ENCODE measurements at regions of chr9 and their contacts with region 1.

Region 1: DNA sequence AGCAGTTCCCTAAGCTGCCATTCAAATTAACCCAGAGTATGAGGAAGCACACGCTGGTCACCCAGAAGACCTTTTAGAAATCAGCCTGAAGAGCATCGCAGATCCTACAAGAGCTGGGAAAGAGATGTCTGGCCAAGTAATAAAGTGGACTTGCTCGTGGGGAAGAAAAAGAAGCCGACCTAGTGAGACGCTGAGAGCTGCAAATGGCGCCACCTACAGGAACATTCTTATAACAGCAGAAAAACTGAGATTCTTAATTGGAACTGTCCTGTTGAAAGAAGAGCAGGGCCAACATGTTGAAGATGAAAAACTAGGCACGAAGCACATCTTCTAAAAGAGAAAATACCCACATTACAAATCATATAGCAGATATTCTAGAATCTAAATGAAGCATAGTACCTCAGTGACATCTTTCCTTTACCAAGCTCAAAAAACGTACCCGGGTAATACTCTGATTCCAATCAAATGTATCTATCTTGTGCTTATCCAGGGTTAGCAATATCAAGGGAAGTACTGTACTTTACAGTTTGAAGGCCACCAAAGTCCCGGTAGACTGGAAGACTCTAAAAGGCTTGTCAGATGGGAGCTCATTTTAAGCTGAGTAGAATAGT is 3.9 kb upstream of the GNAQ start:
- DNase-seq: peak; percentile 48
- ATAC-seq: no peak
- H3K4me3 ChIP-seq: no peak overlapping the region
- H3K27ac ChIP-seq: no peak overlapping the region
- H3K4me1 ChIP-seq: peaks cover 6% of the 10 kb centered on the region
- H3K27me3 ChIP-seq: no peaks in the 10 kb centered on the region; the same call in 1 of the 2 replicates
- CTCF ChIP-seq: peak; percentile 81

Region 2: GRCh38 chr9:77663754-77664153 is 371.7 kb before region 1 on chr9:
- CTCF ChIA-PET with region 1: no interaction called
- POLR2A ChIA-PET with region 1: no interaction called
- in situ Hi-C with region 1: no loop called
- intact Hi-C with region 1: loop called (anchors 5 kb)
- DNase-seq: no peak
- ATAC-seq: no peak
- H3K4me3 ChIP-seq: no peak overlapping the region
- H3K27ac ChIP-seq: no peak overlapping the region
- H3K4me1 ChIP-seq: no peaks in the 10 kb centered on the region
- H3K27me3 ChIP-seq: no peaks in the 10 kb centered on the region
- CTCF ChIP-seq: no peak

Region 3: DNA sequence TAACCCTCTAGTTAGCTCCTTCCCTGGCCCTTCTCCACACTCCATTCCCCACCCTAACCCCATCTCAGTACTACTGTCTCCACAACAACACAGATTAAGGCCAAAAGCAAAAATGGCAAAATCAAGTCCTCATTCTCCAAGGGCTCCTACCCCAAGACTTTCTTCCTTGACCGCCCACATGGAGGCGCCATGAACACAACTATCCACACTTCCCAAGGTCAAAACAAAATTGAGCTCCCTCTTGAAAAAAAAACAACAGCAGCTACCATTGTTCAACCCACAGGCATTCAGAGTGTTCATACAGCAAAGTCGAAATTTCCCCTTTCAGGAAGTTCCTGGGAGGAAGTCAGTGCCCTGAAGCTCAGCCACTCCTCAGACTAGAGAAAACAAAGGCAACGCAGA is 58.3 kb before region 1 on chr9:
- CTCF ChIA-PET with region 1: interaction called, 3 read pairs
- POLR2A ChIA-PET with region 1: no interaction called
- in situ Hi-C with region 1: no loop called
- intact Hi-C with region 1: loop called (anchors 5 kb)
- DNase-seq: peak; percentile 15
- ATAC-seq: peak; percentile 69; the same call in 1 of the 2 replicates
- H3K4me3 ChIP-seq: no peak overlapping the region
- H3K27ac ChIP-seq: no peak overlapping the region
- H3K4me1 ChIP-seq: no peaks in the 10 kb centered on the region; the same call in 1 of the 2 replicates
- H3K27me3 ChIP-seq: no peaks in the 10 kb centered on the region
- CTCF ChIP-seq: peak; percentile 65

Measured in Panc1 (cell line).